ENCODE measurements at regions of chr2 and their contacts with region 1.

Region 1: DNA sequence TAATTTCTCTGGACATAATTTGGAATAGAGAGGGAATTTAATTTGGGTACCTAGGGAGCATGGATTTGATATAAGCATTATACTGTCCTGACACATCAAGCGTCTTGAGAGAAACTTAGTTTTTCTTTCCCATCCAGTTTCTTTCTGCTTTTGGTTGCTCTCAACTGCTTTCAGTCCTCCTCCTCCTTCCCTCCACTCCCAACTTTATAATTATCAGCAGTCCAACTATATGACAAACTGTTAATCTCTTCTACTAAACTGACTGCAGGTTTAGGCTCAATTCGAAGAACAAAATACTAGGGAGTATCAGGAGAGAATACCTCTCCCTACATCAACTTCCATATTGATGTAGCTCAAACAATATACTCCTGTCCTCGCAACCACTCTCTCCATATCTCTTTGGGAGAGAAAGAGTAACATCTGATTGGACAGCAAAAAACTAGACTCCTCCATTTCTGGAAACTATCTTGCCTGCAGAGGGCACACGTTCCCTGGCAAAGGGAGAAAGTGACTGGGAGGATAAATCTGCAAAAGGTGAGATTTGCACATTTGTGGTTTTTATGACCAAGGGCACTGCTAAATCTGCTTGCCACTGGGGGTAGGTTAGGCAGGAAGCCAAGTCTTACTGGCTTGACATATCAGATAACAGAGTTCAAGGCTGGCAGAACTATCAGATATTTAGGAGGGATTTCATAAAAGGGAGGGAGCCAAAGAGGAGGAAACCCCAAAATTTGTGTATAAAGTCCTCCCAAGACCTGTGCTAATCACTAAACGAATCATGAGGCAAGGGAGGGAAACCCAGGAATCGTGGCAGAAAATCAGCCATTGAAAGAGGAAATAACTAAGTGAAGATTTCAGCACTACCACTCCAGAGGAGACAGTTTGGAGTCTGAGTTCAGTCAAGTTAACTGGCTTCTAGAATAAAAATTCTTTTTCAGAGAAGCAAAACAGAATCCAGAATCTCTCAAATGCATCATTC is 40.0 kb downstream of the ICA1L start:
- DNase-seq: peak in 8 of 9 experiments; percentile 8 to 76 (median 44)
- ATAC-seq: peak; percentile 71
- H3K4me3 ChIP-seq: no peak overlapping the region
- H3K4me3 Mint-ChIP-seq: peak overlapping the region; percentile 33
- H3K27ac ChIP-seq: no peak overlapping the region
- H3K27ac Mint-ChIP-seq: no peak overlapping the region
- H3K4me1 ChIP-seq: peaks cover 11% of the 10 kb centered on the region
- H3K4me1 Mint-ChIP-seq: peaks cover 13% of the 10 kb centered on the region
- H3K27me3 ChIP-seq: no peaks in the 10 kb centered on the region
- H3K27me3 Mint-ChIP-seq: no peaks in the 10 kb centered on the region
- CTCF ChIP-seq: peak; percentile 49

Region 2: DNA sequence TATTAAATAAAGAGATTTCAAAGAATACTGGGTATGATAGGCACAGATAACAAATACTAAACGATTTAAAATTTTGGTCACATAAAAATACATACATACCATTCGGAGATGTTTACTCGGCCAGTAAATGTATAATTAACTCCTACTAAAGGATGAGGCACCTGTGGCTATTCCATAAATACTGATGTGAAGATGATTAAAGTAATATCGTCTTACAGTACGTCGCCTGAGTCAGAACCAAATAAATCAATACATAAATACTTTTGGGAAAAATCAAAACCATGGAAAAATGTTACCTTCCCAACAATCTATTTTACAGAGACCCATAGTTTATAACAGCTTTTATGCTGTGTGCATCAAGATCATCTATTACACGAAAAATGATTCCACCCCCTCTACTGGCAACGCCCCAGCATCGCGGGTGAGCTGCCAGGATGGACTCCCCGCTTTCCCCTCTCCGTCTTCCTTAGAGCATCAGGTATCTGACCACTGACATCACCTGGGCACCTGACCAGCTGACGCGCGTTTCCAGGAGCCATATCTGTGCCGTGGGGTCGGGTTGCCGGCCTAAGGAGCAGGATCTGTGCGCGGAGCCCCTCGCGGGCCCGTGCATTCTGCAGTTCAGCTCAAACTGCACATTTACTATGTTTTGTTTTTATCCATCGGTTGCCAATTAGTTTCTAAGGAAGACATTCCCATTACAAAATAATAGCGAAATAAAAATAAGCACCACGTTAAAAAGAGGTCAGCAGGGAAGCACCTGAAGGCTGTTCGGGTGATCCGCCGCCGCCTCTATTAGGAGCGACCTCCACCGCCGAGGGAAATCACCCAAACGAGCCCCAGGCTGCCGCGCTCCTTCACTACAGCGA is 39.1 kb after region 1 on chr2:
- CTCF ChIA-PET with region 1: no interaction called
- POLR2A ChIA-PET with region 1: no interaction called
- intact Hi-C with region 1: loop called (anchors 1 to 2 kb)
- DNase-seq: peak; percentile 31 to 80 (median 63)
- ATAC-seq: peak; percentile 79
- H3K4me3 ChIP-seq: peak overlapping the region; percentile 56 to 97
- H3K4me3 Mint-ChIP-seq: peak overlapping the region; percentile 97
- H3K27ac ChIP-seq: peak overlapping the region; percentile 48 to 60
- H3K27ac Mint-ChIP-seq: peak overlapping the region; percentile 83
- H3K4me1 ChIP-seq: no peaks in the 10 kb centered on the region
- H3K4me1 Mint-ChIP-seq: peaks cover 9% of the 10 kb centered on the region
- H3K27me3 ChIP-seq: no peaks in the 10 kb centered on the region
- H3K27me3 Mint-ChIP-seq: no peaks in the 10 kb centered on the region
- CTCF ChIP-seq: peak; percentile 69

Measured in CD8-positive, alpha-beta T cell (primary cell).